Stomach (tissue), 19 donors: ENCODE measurements at regions of chr17 and their contacts with region 1.

Region 1: GRCh38 chr17:61412143-61412859 is 12.7 kb downstream of the TBX2 start:
- DNase-seq: peak; percentile 82 to 93
- H3K4me3 ChIP-seq: peak overlapping the region; percentile 46 to 75 (median 65)
- H3K27ac ChIP-seq: peak overlapping the region; percentile 55 to 93 (median 84)
- H3K4me1 ChIP-seq: peaks cover 32 to 83% (median 70%) of the 10 kb centered on the region in 4 donors
- H3K27me3 ChIP-seq: peaks cover 5 to 81% (median 50%) of the 10 kb centered on the region in 3 donors
- CTCF ChIP-seq: peak in 5 of 7 experiments; percentile 90 to 100 (median 98)
- EP300 ChIP-seq: no peak
- POLR2A ChIP-seq: no peak

Region 2: DNA sequence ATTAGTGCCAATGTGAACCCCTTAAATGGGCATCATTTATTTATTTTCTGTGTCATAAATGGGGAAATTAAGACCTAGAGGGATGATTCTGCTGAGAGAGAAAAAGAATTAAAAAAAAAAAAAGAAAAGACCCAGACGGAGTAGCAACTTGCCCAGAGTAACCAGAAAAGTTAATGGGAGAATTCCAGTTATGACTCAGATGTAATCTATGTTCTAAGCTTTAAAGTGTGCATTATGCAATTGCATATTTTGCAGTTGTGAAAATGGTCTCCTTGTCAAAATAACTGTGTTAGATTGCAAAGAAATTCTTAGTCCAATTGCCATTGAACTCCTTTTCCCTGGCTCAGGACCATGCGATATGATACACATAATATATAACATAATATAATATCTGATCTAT is 51.2 kb before region 1 on chr17:
- intact Hi-C with region 1: no loop called
- DNase-seq: no peak
- H3K4me3 ChIP-seq: no peak overlapping the region
- H3K27ac ChIP-seq: no peak overlapping the region
- H3K4me1 ChIP-seq: peaks cover 0 to 8% (median 3%) of the 10 kb centered on the region in 4 donors
- H3K27me3 ChIP-seq: no peaks in the 10 kb centered on the region
- CTCF ChIP-seq: no peak
- EP300 ChIP-seq: no peak
- POLR2A ChIP-seq: no peak

Region 3: DNA sequence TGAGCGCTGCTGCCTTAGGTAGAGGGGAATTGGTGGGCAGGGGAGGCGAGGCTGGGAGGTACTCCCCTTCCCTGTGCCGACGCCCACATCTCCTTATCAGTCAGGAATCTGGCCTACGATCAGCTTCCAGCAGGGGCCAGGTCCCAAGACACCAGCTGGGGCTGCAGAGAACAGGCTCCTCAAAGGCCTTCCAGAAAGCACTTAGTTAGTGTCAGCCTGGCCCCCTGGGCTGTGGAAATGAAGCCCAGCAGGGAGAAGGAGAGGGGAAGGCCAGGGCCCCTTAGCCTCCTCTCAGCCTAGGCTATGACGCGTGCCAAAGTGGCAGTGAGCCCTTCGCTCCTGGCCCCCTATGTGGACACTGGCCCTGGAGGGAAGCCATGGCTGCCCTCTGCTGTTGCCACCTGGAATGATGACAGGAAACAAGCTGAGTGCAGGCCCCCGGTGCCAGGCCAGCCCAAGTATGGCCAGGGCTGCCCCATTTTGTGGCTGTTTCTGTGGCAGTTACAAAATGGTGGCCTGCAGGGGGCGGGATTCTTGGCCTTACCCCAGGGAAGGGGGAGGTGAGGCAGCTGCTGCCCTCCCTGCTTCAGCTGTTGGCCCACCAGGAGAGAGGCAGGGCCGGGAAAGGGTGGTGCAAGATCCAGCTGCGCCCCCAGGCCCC is 51.1 kb after region 1 on chr17:
- intact Hi-C with region 1: no loop called
- DNase-seq: no peak
- H3K4me3 ChIP-seq: no peak overlapping the region
- H3K27ac ChIP-seq: no peak overlapping the region
- H3K4me1 ChIP-seq: peaks cover 8 to 32% (median 12%) of the 10 kb centered on the region in 4 donors
- H3K27me3 ChIP-seq: peaks cover 7 to 69% (median 53%) of the 10 kb centered on the region in 3 donors
- CTCF ChIP-seq: no peak
- EP300 ChIP-seq: no peak
- POLR2A ChIP-seq: no peak

Region 4: DNA sequence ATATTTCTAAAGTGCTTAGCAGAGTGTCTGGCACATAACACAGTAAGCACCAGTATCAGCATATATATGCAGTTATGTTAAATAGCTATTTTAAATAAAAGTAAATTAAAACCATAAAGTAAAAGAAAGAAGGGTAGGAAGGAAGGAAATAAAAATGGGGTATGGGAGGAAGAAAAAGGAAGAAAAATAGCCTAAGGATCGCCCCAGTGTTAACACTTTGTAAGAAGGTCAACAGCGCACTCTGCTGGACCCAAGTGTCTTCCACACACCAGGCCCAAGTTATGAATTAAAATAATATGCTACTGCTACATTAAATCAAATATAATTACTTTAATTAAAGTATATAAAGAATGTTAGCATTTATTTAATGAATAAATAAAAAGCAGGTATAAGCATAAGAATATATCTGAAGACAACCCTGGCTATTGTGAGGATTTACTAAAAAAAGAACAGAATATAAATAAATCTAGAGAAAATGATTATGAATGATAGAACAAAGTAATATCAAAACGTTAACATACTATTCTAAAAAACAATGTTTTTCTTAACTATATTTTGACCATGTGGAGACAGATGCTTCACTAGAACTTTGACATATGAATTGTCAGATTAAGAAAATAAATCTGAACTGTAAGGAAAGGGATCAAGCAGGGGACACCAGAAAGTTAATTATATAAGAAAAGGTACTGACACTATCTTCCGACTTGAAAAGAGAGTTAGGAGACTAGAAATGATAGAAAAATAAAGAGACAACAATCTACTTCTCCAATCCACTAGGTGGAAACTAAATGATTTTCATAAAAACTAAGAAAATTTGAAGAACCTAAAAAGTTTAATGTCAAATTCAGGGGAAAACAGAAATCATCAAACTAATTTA is 425.1 kb after region 1 on chr17:
- intact Hi-C with region 1: loop called (anchors 10 kb)
- DNase-seq: peak; percentile 65 to 87
- H3K4me3 ChIP-seq: no peak overlapping the region
- H3K27ac ChIP-seq: no peak overlapping the region
- H3K4me1 ChIP-seq: no peaks in the 10 kb centered on the region
- H3K27me3 ChIP-seq: no peaks in the 10 kb centered on the region
- CTCF ChIP-seq: peak in 5 of 7 experiments; percentile 26 to 66 (median 54)
- EP300 ChIP-seq: no peak
- POLR2A ChIP-seq: no peak